Heart right ventricle (tissue), 16 donors: ENCODE measurements at regions of chr10 and their contacts with region 1.

Region 1: DNA sequence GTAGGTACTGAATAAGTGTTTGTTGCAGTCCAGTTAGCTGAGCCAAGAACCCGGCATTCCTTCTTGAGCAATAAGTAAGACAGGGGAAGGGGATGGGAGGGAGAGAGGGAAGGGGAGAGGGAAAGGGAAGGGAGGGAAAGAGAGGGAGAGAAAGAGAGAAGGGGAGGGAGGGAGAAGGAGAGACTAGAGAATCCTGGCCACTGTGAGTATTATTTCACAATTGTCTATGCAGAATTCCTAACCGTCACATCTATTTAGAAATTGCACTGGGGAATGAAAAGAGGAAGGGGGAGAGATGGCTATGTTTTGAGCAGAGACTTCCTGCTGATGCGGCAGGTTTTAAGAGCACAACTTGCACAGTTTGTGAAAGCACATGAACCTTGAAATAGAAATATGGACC is 251.4 kb upstream of the ZMIZ1 start:
- DNase-seq: no peak
- ATAC-seq: peak in 7 of 8 donors; percentile 16 to 80 (median 55)
- H3K4me3 ChIP-seq: no peak overlapping the region
- H3K27ac ChIP-seq: no peak overlapping the region
- H3K4me1 ChIP-seq: peaks cover 0 to 9% (median 0%) of the 10 kb centered on the region in 9 donors
- H3K27me3 ChIP-seq: no peaks in the 10 kb centered on the region
- CTCF ChIP-seq: no peak

Region 2: GRCh38 chr10:78843495-78843894 is 26.1 kb after region 1 on chr10:
- intact Hi-C with region 1: loop called in 1 of 10 experiments (anchors 2 kb)
- DNase-seq: no peak
- ATAC-seq: no peak
- H3K4me3 ChIP-seq: no peak overlapping the region
- H3K27ac ChIP-seq: no peak overlapping the region
- H3K4me1 ChIP-seq: no peaks in the 10 kb centered on the region
- H3K27me3 ChIP-seq: peaks cover 0 to 4% (median 0%) of the 10 kb centered on the region in 7 donors
- CTCF ChIP-seq: no peak